Activated CD4-positive, alpha-beta T cell treated with anti-CD3 and anti-CD28 coated beads, Interleukin-2, amount 10 ng/mL, durations not matched to agents 7 days and 5 days (primary cell): ENCODE measurements at regions of chr17 and their contacts with region 1.

Region 1: DNA sequence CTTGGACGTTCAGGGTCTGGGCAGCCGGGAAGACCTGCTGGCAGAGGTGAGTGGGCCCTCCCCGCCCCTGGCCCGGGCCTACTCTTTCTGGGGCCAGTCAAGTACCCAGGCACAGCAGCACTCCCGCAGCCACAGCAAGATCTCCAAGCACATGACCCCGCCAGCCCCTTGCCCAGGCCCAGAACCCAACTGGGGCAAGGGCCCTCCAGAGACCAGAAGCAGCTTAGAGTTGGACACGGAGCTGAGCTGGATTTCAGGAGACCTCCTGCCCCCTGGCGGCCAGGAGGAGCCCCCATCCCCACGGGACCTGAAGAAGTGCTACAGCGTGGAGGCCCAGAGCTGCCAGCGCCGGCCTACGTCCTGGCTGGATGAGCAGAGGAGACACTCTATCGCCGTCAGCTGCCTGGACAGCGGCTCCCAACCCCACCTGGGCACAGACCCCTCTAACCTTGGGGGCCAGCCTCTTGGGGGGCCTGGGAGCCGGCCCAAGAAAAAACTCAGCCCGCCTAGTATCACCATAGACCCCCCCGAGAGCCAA is 8.6 kb upstream of the ABCC3 start:
- DNase-seq: peak; percentile 65
- H3K4me3 Mint-ChIP-seq: no peak overlapping the region
- H3K27ac Mint-ChIP-seq: no peak overlapping the region
- H3K4me1 Mint-ChIP-seq: peaks cover 4% of the 10 kb centered on the region
- H3K27me3 Mint-ChIP-seq: peaks cover 31% of the 10 kb centered on the region

Region 2: DNA sequence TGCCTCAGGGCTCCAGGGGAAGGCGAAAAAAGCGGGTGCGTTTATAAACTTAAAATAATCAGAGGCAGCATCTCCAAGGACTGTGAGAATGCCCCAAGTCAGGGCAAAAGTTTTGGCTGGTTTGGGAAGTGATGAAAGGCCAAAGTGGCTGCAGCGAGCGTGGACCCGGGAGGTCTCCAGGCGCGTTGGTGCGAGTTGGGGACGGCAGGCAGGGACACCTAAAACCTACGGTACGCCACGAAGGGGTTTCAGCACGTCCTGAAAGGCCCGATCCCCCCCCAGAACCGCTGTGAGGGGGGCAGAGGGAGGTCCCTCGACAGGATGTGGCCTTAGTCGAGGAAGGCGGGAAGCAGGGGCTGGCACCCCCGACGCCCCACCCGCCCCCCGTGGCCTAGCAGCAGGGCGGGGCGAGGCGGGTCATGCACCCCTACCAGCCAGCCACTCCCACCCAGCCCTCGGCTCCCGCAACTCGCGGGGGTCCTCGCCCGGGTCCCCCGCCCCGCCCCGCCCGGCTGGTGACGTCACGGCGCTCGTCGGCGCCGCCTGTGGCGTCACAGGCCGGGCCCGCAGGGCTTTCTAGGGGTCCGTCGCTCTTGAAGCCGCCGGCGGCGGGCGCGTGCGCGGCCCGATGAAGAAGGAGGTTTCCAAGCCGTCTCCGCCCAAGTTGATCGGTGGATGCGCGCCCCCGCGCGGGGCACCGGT is 118.1 kb before region 1 on chr17 and contains the start of gene MYCBPAP:
- CTCF ChIA-PET with region 1: no interaction called
- POLR2A ChIA-PET with region 1: no interaction called
- DNase-seq: peak; percentile 77
- H3K4me3 Mint-ChIP-seq: peak within 1 kb of the TSS; percentile 79
- H3K27ac Mint-ChIP-seq: peak within 1 kb of the TSS; percentile 87
- H3K4me1 Mint-ChIP-seq: peaks cover 57% of the 10 kb centered on the region
- H3K27me3 Mint-ChIP-seq: peaks cover 9% of the 10 kb centered on the region
- total RNA-seq, gene MYCBPAP: 3.0 to 4.8 TPM

Region 3: DNA sequence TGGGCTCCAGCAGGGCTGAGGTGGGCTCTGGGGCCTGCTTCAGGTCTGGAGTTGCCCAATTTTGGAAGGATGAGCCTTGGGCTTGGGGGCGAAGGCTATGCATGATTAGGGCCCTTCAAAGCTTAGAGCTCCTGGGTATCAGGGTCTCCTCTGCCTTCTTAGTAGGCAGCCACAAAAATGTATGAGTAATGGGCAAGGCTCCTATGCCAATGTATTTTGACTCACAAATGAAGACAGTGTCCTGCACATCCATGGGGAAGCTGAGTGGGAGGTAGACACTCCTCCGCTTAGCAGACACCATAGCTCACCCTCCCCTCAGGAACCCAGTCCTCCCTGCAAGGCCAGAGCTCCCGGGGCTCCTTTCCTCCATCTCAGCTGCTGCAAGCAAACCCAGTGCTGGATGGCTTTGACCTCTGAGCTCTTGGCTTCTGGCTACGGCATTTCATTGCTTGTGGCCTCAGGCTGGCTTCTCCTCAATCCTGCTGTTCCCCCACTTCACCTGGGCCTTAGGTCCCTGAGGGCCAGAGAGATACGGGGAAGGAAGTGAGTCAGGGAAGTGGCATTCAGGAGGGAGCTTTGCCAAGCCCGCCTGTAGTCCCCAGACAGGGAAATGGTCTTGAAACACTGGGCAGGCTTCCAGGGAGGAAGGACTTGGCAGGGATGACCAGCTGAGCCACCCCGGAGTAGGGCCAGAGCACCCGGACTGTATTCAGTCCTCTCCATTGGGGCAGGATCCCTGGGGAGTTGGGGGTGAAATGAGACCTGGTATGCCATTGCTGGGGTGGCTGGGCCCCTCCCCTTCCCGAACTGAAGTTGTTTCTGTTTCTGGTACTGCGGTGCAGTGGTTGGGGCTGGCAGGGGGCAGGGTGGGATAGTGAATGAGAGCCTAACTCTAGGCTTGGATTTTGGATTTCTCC is 13.0 kb after region 1 on chr17:
- CTCF ChIA-PET with region 1: interaction called, 13 read pairs
- POLR2A ChIA-PET with region 1: no interaction called
- DNase-seq: no peak
- H3K4me3 Mint-ChIP-seq: no peak overlapping the region
- H3K27ac Mint-ChIP-seq: no peak overlapping the region
- H3K4me1 Mint-ChIP-seq: peaks cover 1% of the 10 kb centered on the region
- H3K27me3 Mint-ChIP-seq: peaks cover 34% of the 10 kb centered on the region